ENCODE measurements at regions of chr19 and their contacts with region 1.

Region 1: GRCh38 chr19:41893899-41894298 is 10.9 kb downstream of the ARHGEF1 start:
- DNase-seq: no peak
- ATAC-seq: no peak
- H3K4me3 ChIP-seq: no peak overlapping the region
- H3K27ac ChIP-seq: no peak overlapping the region
- H3K4me1 ChIP-seq: peaks cover 0 to 5% (median 0%) of the 10 kb centered on the region in 12 donors
- H3K27me3 ChIP-seq: no peaks in the 10 kb centered on the region
- CTCF ChIP-seq: no peak
- POLR2A ChIP-seq: no peak

Region 2: GRCh38 chr19:41939861-41940730 is 46.2 kb after region 1 on chr19:
- intact Hi-C with region 1: loop called in 1 of 10 experiments (anchors 5 kb)
- DNase-seq: peak in 1 of 5 donors; percentile 54
- ATAC-seq: peak in 1 of 4 donors; percentile 43
- H3K4me3 ChIP-seq: peak overlapping the region; percentile 22 to 60 (median 53)
- H3K27ac ChIP-seq: peak overlapping the region in 1 of 12 donors; percentile 2
- H3K4me1 ChIP-seq: peaks cover 0 to 17% (median 3%) of the 10 kb centered on the region in 12 donors
- H3K27me3 ChIP-seq: peaks cover 8 to 48% (median 28%) of the 10 kb centered on the region in 9 donors
- CTCF ChIP-seq: no peak
- POLR2A ChIP-seq: no peak

Region 3: GRCh38 chr19:41984961-41985360 is 91.1 kb after region 1 on chr19:
- intact Hi-C with region 1: no loop called
- DNase-seq: no peak
- ATAC-seq: peak in 1 of 4 donors; percentile 11
- H3K4me3 ChIP-seq: no peak overlapping the region
- H3K27ac ChIP-seq: no peak overlapping the region
- H3K4me1 ChIP-seq: no peaks in the 10 kb centered on the region
- H3K27me3 ChIP-seq: no peaks in the 10 kb centered on the region
- CTCF ChIP-seq: no peak
- POLR2A ChIP-seq: no peak

Measured in heart left ventricle (tissue), 16 donors.